ENCODE measurements at regions of chr20 and their contacts with region 1.

Region 1: DNA sequence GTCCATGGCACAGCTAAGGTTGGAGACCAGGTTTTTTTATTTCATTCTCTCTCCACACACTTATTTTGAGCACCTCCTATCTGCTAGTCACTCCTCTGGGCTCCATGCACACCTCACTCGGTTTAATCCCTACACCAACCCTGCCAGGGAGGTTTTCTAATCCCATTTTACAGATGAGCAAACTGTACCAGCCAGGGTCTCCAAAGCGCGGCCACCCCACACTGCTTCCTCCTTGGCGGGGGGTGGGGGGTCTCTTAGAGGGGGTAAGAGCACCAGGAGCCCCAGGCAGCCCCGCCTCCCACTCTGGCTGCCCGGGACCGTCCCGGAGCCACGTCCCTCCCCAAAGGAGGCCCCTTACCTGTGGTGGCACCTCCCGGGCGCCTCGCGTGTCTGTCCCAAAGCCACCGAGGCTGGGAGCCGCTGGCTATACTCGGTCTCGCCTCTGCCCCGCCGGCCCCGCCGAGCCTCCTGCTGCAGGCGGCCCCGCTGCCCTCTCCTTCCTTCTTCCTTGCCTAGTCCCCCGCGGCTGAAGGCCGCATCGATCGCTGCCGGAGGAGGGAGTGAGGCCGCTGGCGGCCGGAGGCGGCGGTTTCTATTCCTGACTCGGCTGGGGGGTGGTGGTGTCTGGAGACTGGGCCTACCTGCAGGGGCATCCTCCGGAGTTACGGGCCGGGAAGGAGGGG is at the start of gene KCNS1:
- DNase-seq: no peak
- H3K4me3 ChIP-seq: peak within 1 kb of the TSS; percentile 19
- CTCF ChIP-seq: peak; percentile 14

Region 2: GRCh38 chr20:45049904-45050471 is 50.7 kb before region 1 on chr20:
- in situ Hi-C with region 1: loop called (anchors 5 kb)
- DNase-seq: no peak
- H3K4me3 ChIP-seq: no peak overlapping the region
- CTCF ChIP-seq: no peak

Region 3: DNA sequence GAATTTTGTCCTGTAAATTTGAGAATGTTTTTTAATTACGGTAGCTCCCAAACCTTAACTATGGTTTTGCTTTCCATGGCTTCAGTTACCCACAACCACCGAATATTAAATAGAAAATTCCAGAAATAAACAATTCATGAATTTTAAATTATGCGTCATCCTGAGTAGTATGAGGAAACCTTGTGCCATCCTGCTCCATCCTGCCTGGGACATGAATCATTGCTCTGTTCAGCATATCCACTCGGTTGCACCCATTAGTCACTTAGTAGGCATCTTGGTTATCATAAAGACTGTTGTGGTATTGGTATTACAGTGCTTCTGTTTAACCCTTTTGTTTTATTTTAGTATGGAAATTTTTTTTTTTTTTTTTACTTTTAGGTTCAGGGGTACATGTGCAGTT is 39.5 kb before region 1 on chr20:
- in situ Hi-C with region 1: no loop called
- DNase-seq: peak; percentile 60
- H3K4me3 ChIP-seq: no peak overlapping the region
- CTCF ChIP-seq: no peak

Region 4: DNA sequence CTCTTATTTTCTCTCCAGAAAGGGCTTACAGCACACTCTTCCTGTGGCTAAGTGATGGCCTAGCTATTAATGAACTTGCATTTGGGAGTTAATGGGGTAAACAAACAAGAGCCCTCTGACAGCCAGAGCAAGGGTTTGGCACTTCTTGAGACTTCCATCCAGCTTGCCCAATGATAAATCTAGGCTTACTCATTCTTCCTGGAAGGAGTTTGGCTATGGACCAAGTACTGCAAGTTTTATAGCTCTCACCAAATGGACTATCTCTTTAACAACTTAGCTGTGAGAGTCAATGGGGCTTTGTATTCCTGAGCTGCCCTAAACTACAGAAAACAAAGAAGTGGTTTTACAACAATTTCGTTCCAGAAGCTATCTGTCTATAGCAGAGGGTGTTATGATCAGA is 57.3 kb after region 1 on chr20:
- in situ Hi-C with region 1: no loop called
- DNase-seq: peak; percentile 35
- H3K4me3 ChIP-seq: no peak overlapping the region
- CTCF ChIP-seq: no peak

Measured in astrocyte of the cerebellum (primary cell).